ENCODE measurements at regions of chr6 and their contacts with region 1.

Region 1: DNA sequence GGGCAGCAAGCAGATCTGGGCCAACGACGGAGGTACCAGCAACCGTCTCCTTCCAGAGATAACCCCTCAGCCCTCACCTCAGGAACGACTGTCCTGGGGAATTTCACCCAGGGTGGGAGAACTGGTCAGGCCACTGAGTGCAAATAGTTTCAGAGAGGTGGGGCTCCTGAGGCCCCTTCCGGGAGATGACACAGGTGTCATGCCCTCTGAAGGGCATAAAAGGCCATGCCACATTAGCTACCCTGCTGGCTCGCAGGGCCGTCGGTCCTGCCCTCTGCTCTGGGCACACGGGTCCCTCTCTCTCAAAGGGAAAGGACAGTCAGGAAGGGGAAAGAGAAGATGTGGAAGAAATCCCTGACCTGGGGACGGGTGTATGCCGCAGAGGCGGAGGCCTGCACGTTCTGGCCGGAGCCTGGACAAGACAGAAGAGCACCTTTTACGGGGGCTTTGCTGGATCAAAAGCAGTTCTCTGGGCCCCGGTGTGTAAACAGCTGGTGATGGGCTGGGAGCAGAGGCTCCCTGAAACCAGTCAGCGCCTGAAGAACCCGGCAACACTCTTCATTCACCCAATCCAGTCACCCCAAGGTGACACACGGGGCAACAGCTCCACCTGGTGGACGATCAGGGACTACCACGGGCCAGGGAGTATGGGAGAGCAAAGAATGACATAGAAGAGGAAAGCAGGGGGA is 6.4 kb upstream of the TAF8 start:
- DNase-seq: peak; percentile 86 to 90 (median 89)
- H3K4me3 ChIP-seq: peak overlapping the region in 1 of 2 donors; percentile 49
- H3K4me3 Mint-ChIP-seq: peak overlapping the region; percentile 81 to 97 (median 86)
- H3K27ac ChIP-seq: peak overlapping the region; percentile 57
- H3K27ac Mint-ChIP-seq: peak overlapping the region; percentile 57 to 98 (median 90)
- H3K4me1 ChIP-seq: peaks cover 76% of the 10 kb centered on the region
- H3K4me1 Mint-ChIP-seq: peaks cover 42 to 92% (median 62%) of the 10 kb centered on the region in 4 donors
- H3K27me3 ChIP-seq: no peaks in the 10 kb centered on the region
- H3K27me3 Mint-ChIP-seq: no peaks in the 10 kb centered on the region

Region 2: DNA sequence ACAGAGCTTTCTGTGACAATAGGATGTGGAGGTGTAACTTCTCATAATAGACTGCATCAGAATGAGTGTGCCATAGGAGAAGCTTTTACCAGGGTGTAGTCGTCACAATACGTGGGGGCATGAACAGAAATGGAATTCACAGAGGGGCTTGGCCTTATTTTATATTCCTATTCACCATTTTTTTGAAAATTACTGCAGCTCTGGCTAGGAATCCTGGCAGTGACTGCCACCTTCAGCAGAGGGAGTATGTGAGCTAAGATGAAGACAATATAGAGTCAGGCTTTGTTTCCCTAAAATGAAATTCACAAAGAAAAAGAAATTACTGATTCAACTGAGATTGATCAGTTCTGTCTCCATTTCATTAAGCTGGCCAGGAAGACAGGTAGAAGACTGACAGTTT is 242.6 kb before region 1 on chr6:
- CTCF ChIA-PET with region 1: interaction called, 10 read pairs
- POLR2A ChIA-PET with region 1: no interaction called
- intact Hi-C with region 1: no loop called
- DNase-seq: no peak
- H3K4me3 ChIP-seq: no peak overlapping the region
- H3K4me3 Mint-ChIP-seq: no peak overlapping the region
- H3K27ac ChIP-seq: no peak overlapping the region
- H3K27ac Mint-ChIP-seq: no peak overlapping the region
- H3K4me1 ChIP-seq: no peaks in the 10 kb centered on the region
- H3K4me1 Mint-ChIP-seq: peaks cover 0 to 1% (median 0%) of the 10 kb centered on the region in 4 donors
- H3K27me3 ChIP-seq: no peaks in the 10 kb centered on the region
- H3K27me3 Mint-ChIP-seq: no peaks in the 10 kb centered on the region

Region 3: DNA sequence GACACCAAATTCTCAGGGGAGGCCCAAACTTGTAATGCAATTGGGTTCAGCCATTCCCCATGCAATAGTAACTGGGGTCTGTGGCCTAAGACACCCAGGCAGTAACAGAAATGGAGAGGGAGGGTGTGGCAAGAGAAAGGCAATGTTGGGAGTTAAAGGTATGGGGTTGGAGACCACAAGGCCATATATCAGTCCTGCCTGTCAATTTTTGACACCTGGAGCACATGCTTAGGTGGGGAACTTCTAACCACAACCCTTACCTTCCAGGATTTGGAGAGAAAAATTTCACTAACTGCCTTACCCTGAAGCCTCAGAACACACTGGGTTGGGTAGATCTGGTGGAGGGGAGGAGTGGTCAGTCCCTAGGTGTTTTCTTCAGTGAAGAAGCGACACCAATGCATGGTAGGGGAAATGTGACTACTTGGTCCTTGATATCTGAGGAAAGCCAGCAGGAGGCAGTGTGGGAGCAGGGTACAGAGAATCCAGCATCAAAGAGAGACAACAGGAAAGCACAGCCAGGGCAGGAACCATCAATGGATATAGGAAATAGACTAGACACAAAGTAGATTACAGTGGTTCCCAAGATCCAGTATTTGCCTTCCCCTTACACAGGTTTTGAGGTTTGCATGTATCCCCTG is 141.9 kb before region 1 on chr6:
- CTCF ChIA-PET with region 1: interaction called, 18 read pairs
- POLR2A ChIA-PET with region 1: no interaction called
- intact Hi-C with region 1: loop called (anchors 1 kb)
- DNase-seq: peak; percentile 54 to 61 (median 60)
- H3K4me3 ChIP-seq: no peak overlapping the region
- H3K4me3 Mint-ChIP-seq: no peak overlapping the region
- H3K27ac ChIP-seq: no peak overlapping the region
- H3K27ac Mint-ChIP-seq: peak overlapping the region in 3 of 7 donors; percentile 1 to 35 (median 4)
- H3K4me1 ChIP-seq: peaks cover 6% of the 10 kb centered on the region
- H3K4me1 Mint-ChIP-seq: peaks cover 7 to 13% (median 10%) of the 10 kb centered on the region in 4 donors
- H3K27me3 ChIP-seq: no peaks in the 10 kb centered on the region
- H3K27me3 Mint-ChIP-seq: no peaks in the 10 kb centered on the region

Region 4: DNA sequence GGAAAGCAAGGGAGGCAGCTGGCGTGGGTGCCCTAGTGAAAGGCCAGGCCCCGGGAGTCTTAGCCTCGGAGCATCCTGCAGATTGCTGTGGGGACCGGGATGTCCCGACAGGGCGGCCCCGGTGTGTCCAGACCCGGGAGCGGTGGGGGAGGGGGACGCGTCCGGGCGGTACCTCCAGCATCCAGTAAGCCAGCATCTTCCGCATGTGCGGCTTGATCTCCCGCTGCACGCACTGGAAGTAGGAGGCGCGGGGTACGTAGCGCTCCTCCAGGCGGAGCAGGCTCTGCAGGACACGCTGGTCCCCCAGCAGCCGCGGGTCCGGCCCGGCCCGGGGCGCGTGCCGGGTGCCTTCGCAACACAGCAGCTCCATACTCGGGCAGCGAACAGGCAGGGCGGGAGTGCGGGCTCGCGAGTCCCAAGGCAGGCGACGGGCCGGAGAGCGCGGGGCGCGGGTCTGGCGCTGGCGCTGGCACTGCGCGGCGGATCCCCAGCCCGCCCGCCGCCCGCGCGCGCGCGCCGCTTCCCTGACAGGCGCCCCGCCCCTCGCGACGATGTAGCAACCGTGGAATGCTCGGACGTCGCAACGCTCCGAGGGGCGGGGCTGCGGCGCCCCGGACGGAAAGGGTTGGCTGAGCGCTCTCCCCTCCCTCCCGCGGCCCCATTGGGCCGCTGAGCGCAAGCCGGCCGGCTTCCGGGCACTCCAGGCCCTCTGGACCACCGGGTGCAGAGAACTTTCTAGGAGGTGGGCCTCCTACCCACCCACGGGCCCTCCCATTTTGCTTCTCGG is 102.5 kb before region 1 on chr6 and contains the start of gene CCND3:
- CTCF ChIA-PET with region 1: interaction called, 169 read pairs
- POLR2A ChIA-PET with region 1: interaction called, 280 read pairs
- intact Hi-C with region 1: loop called (anchors 1 kb)
- DNase-seq: peak; percentile 77 to 86 (median 79)
- H3K4me3 ChIP-seq: peak within 1 kb of the TSS; percentile 75 to 76
- H3K4me3 Mint-ChIP-seq: peak within 1 kb of the TSS; percentile 83 to 99 (median 95)
- H3K27ac ChIP-seq: peak within 1 kb of the TSS; percentile 80
- H3K27ac Mint-ChIP-seq: peak within 1 kb of the TSS; percentile 91 to 96 (median 93)
- H3K4me1 ChIP-seq: peaks cover 77% of the 10 kb centered on the region
- H3K4me1 Mint-ChIP-seq: peaks cover 48 to 80% (median 61%) of the 10 kb centered on the region in 4 donors
- H3K27me3 ChIP-seq: no peaks in the 10 kb centered on the region
- H3K27me3 Mint-ChIP-seq: no peaks in the 10 kb centered on the region
- total RNA-seq, gene CCND3: 223 to 242 TPM

Region 5: GRCh38 chr6:42021847-42022754 is 21.8 kb before region 1 on chr6:
- CTCF ChIA-PET with region 1: interaction called, 12 read pairs
- POLR2A ChIA-PET with region 1: interaction called, 27 read pairs
- intact Hi-C with region 1: loop called (anchors 1 kb)
- DNase-seq: peak; percentile 73 to 93 (median 81)
- H3K4me3 ChIP-seq: peak overlapping the region in 1 of 2 donors; percentile 47
- H3K4me3 Mint-ChIP-seq: peak overlapping the region; percentile 75 to 92 (median 85)
- H3K27ac ChIP-seq: peak overlapping the region; percentile 65
- H3K27ac Mint-ChIP-seq: peak overlapping the region; percentile 91 to 98 (median 95)
- H3K4me1 ChIP-seq: peaks cover 83% of the 10 kb centered on the region
- H3K4me1 Mint-ChIP-seq: peaks cover 60 to 80% (median 66%) of the 10 kb centered on the region in 4 donors
- H3K27me3 ChIP-seq: no peaks in the 10 kb centered on the region
- H3K27me3 Mint-ChIP-seq: no peaks in the 10 kb centered on the region

Region 6: GRCh38 chr6:42118162-42119001 is 74.5 kb after region 1 on chr6:
- CTCF ChIA-PET with region 1: no interaction called
- POLR2A ChIA-PET with region 1: no interaction called
- intact Hi-C with region 1: no loop called
- DNase-seq: no peak
- H3K4me3 ChIP-seq: no peak overlapping the region
- H3K4me3 Mint-ChIP-seq: no peak overlapping the region
- H3K27ac ChIP-seq: no peak overlapping the region
- H3K27ac Mint-ChIP-seq: no peak overlapping the region
- H3K4me1 ChIP-seq: no peaks in the 10 kb centered on the region
- H3K4me1 Mint-ChIP-seq: no peaks in the 10 kb centered on the region
- H3K27me3 ChIP-seq: no peaks in the 10 kb centered on the region
- H3K27me3 Mint-ChIP-seq: peaks cover 5 to 8% of the 10 kb centered on the region in 2 donors

Region 7: GRCh38 chr6:42166444-42167141 is 122.7 kb after region 1 on chr6:
- CTCF ChIA-PET with region 1: interaction called, 12 read pairs
- POLR2A ChIA-PET with region 1: no interaction called
- intact Hi-C with region 1: loop called (anchors 1 kb)
- DNase-seq: peak; percentile 61 to 73 (median 67)
- H3K4me3 ChIP-seq: no peak overlapping the region
- H3K4me3 Mint-ChIP-seq: no peak overlapping the region
- H3K27ac ChIP-seq: no peak overlapping the region
- H3K27ac Mint-ChIP-seq: peak overlapping the region in 2 of 7 donors; percentile 66 to 87
- H3K4me1 ChIP-seq: no peaks in the 10 kb centered on the region
- H3K4me1 Mint-ChIP-seq: peaks cover 0 to 8% (median 2%) of the 10 kb centered on the region in 4 donors
- H3K27me3 ChIP-seq: no peaks in the 10 kb centered on the region
- H3K27me3 Mint-ChIP-seq: peaks cover 3 to 5% of the 10 kb centered on the region in 2 donors